HAP-1 (cell line): ENCODE measurements at regions of chr6 and their contacts with region 1.

Region 1: DNA sequence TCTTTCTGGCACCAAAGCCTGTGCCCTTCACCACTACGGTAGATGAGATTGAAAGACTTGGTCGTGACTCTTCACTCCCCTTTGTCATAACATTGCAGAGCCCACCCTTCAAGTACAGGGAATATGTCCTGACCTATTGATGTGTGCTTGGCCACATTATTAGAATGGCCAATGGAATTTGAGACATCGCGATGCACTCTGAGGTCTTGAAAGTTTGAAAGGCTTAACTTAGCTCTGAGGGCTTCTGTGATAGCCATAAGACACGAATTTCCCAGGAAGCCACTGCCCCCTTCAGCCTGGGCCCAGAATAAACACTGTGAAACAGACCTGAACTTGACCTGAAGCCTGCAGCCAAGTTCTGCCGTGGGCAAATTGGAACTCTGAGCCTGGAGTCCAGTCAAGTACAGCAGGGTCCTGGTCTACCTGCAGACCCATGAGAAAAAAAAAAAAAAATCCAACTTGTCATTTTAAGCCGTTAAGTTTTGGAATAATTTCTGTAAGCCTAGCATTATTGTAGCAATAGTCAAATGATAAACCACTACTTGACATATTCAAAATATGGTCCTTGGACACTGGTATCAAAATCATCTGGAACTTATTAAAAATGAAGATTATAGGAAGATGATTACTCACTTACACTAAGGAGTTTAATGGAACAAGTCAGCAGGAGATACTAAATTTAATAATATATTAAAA is 36.9 kb upstream of the TRAF3IP2 start:
- DNase-seq: peak; percentile 69 to 80
- H3K4me3 ChIP-seq: no peak overlapping the region
- H3K4me1 ChIP-seq: no peaks in the 10 kb centered on the region
- H3K27me3 ChIP-seq: no peaks in the 10 kb centered on the region

Region 2: DNA sequence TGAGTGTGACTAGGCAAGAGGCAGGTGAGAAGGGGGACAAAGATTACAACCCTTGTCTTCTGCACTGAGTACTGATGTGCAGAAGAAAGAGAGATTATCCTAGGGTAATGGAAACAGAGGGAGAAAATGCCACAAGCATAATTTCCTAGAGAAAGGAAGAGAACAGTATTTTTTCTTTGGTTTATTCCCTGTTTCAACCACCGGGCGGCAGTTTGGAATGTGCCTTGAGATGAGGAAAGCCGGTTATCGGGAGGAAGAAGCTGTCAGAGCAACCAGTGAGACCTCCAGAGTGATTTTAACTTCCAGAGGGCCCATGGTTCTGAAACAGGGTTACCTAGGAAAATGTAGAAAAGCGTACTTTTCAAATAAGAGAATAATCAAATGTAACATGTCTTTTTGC is 281.0 kb before region 1 on chr6:
- in situ Hi-C with region 1: loop called (anchors 25 kb)
- DNase-seq: peak; percentile 47 to 66
- H3K4me3 ChIP-seq: no peak overlapping the region
- H3K4me1 ChIP-seq: no peaks in the 10 kb centered on the region; the same call in 1 of the 2 replicates
- H3K27me3 ChIP-seq: no peaks in the 10 kb centered on the region

Region 3: DNA sequence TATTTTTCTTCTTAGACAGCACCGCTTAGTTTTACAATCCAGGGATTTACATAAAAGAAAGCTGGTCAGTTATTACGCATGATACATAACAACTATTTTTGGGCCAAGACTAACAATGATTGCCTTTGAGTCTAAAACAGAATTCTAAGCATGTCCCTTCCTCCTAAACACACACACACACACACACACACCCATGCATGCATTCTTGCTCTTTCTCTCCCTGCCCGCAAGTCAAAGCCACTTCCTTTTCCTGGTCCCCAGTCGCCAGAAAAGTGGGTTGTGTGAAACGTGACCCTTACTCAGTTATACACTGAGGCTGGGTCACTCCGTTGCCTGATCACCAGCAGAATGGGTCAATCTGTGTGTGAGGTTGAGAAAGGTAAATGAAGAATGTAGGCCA is 199.2 kb after region 1 on chr6:
- in situ Hi-C with region 1: no loop called
- DNase-seq: no peak
- H3K4me3 ChIP-seq: no peak overlapping the region
- H3K4me1 ChIP-seq: no peaks in the 10 kb centered on the region
- H3K27me3 ChIP-seq: no peaks in the 10 kb centered on the region